GM12878 (cell line): ENCODE measurements at regions of chr1 and their contacts with region 1.

Region 1: GRCh38 chr1:81867235-81867634 is 66.5 kb downstream of the ADGRL2 start:
- DNase-seq: no peak
- ATAC-seq: peak; percentile 39
- H3K4me3 ChIP-seq: no peak overlapping the region
- H3K27ac ChIP-seq: no peak overlapping the region
- H3K4me1 ChIP-seq: no peaks in the 10 kb centered on the region
- H3K27me3 ChIP-seq: no peaks in the 10 kb centered on the region
- CTCF ChIP-seq: no peak
- EP300 ChIP-seq: no peak
- POLR2A ChIP-seq: no peak
- RAD21 ChIP-seq: no peak

Region 2: DNA sequence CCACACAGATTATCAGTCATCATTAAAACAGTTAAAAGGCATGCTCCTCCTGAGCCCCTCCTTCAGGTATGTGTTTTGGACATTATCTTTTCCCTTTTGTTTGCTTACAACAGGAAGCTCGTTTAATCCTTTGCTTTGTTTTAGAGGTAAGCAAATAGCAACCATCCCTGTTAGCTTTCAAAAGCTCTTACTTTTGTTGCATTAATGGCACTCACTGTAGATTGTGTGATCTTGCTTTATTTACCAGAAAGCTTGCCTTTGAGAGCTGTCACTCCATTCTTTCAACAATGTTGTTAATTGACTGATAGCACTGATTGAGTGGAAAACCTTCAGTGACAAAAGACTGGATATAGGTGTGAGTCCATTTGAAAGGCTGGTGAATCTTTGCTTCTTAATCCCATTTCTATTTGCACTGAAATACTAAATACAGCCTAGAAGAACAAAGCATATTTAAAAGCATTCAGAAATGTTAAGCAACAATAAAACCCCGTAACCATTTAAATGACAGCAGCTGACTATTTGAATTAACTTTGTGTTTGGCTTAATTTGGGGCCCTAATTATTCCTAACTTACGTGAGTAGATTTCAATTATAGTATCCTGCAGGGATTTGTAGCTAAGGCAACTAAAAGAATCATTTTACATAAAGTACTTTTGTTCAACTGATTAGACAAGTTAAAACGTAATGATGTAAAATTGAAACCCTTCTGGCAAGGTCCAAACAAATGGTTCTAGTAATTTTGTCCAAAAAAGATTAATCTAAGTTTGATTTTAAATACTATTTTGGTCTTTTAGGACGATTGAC is 18.2 kb before region 1 on chr1:
- CTCF ChIA-PET with region 1: interaction called, 3 read pairs
- POLR2A ChIA-PET with region 1: no interaction called
- RAD21 ChIA-PET with region 1: interaction called, 3 read pairs
- SMC1A ChIA-PET with region 1: interaction called, 28 read pairs
- in situ Hi-C with region 1: no loop called
- intact Hi-C with region 1: no loop called
- DNase-seq: no peak
- ATAC-seq: no peak
- H3K4me3 ChIP-seq: no peak overlapping the region
- H3K27ac ChIP-seq: no peak overlapping the region
- H3K4me1 ChIP-seq: no peaks in the 10 kb centered on the region
- H3K27me3 ChIP-seq: no peaks in the 10 kb centered on the region
- CTCF ChIP-seq: no peak
- EP300 ChIP-seq: no peak
- POLR2A ChIP-seq: no peak
- RAD21 ChIP-seq: no peak